Activated T-helper 1 cell treated with anti-CD3 and anti-CD28 coated beads, Interleukin-12 subunit alpha, Interleukin-12 subunit beta, Interleukin-2, Interleukin-4 antibody, amounts not matched to agents 30 ng/mL and 10 ng/mL and 1 ng/mL, durations not matched to agents 14 hours and 24 hours and 36 hours (primary cell): ENCODE measurements at regions of chr11 and their contacts with region 1.

Region 1: DNA sequence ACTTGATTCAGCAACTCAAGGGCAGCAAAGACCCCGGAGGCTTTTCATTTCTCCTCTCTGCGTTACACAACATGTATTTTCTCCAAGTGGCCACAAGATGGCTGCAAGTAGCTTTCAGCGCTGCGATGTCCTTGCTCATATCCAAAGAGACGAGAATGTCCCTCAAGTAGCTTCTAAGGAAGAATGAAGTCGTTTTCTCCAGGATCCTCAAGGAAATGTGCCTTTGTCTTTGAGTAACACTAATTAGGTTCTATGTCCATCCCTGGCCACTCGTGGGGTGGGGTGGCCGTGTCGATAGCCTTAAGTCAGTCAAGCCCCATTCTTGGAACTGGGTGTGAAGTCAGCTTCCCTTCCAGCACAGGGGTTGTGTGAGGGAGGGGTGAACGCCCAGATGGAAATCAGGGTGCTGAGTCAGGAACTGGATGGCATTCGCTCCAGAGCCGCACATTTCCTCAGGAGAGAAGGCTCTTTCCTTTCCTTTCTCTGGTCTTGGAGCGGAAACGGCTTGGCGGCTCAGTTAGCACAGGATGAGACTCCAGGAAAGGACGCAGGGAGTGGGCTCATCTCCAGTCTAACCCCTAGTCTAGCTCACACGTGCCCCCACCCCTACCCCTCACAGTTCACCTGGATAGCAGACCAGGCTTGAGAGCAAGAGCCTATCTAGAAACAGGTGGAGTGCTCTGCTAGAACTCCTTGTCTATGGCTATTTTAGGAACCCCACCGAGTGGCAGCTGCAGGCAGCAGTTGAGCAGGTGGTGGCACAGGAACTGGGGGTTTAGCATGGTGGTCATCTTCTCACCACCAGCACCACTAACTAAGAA is 44.3 kb downstream of the NNMT start:
- DNase-seq: peak; percentile 11
- H3K4me3 Mint-ChIP-seq: peak overlapping the region; percentile 61
- H3K27ac Mint-ChIP-seq: no peak overlapping the region
- H3K4me1 Mint-ChIP-seq: peaks cover 15% of the 10 kb centered on the region
- H3K27me3 Mint-ChIP-seq: peaks cover 17% of the 10 kb centered on the region

Region 2: GRCh38 chr11:114354076-114354475 is 13.6 kb after region 1 on chr11:
- intact Hi-C with region 1: no loop called
- DNase-seq: no peak
- H3K4me3 Mint-ChIP-seq: no peak overlapping the region
- H3K27ac Mint-ChIP-seq: no peak overlapping the region
- H3K4me1 Mint-ChIP-seq: no peaks in the 10 kb centered on the region
- H3K27me3 Mint-ChIP-seq: peaks cover 8% of the 10 kb centered on the region

Region 3: DNA sequence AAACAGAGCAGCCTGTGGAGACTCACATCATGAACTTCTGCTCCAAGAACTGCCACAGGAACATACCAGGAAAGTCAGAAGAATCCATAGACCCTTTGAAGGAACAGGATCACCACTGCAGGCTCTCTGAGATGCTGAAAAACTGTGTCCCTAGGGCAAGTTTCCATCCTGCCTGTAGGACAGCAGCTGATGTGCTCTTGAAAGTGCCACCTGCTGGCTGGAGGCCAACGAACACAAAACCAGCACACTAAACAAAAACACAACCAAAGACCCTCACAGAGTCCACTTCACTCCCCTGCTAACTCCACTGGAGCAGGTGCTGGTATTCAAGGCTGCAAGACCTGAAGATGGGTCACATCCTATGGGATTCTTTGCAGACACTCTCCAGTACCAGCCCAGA is 231.2 kb after region 1 on chr11:
- intact Hi-C with region 1: loop called (anchors 1 kb)
- DNase-seq: no peak
- H3K4me3 Mint-ChIP-seq: no peak overlapping the region
- H3K27ac Mint-ChIP-seq: no peak overlapping the region
- H3K4me1 Mint-ChIP-seq: no peaks in the 10 kb centered on the region
- H3K27me3 Mint-ChIP-seq: no peaks in the 10 kb centered on the region

Region 4: GRCh38 chr11:114606003-114606801 is 265.7 kb after region 1 on chr11:
- intact Hi-C with region 1: loop called (anchors 10 kb)
- DNase-seq: no peak
- H3K4me3 Mint-ChIP-seq: no peak overlapping the region
- H3K27ac Mint-ChIP-seq: no peak overlapping the region
- H3K4me1 Mint-ChIP-seq: no peaks in the 10 kb centered on the region
- H3K27me3 Mint-ChIP-seq: no peaks in the 10 kb centered on the region